AG04450 (cell line): ENCODE measurements at regions of chr1 and their contacts with region 1.

Region 1: DNA sequence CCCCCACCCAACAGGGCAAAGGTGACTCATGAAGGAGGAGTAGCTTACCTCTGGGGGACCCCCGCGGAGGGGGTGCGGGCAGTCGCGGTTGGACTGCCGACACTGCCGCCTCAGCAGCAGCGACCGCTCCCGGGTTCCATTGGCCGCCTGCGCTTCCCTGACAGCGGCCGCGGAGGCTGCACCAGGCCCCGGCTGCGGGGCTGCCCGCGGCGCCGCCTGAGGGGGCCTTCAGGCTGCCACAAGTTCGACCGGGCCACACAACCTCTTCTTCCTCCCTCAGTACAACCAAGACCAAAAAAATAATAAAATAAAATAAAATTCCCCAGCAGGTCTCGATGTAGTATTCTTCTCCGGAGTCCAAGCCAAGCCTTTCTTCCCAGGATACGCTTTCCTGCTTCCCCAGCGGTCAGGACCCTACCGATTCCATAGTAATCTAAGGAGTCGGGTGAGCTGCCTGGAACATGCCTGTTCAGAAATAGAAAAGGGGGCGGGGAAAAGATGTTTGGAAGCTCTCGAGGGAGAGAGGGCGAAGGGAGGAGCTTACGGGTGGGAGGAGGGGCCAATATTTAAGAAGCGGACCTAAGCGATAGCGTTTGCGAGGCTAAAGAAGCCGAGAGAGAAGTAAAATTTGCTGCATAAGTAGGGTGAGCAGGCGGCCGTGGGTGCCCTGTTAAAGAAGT is at the start of gene PI4KB:
- DNase-seq: peak; percentile 93
- H3K4me3 ChIP-seq: peak within 1 kb of the TSS; percentile 84
- H3K27ac ChIP-seq: peak within 1 kb of the TSS; percentile 95
- H3K27me3 ChIP-seq: no peaks in the 10 kb centered on the region
- CTCF ChIP-seq: no peak
- polyA plus RNA-seq, gene PI4KB: 75.2 and 83.2 TPM in 2 replicates

Region 2: DNA sequence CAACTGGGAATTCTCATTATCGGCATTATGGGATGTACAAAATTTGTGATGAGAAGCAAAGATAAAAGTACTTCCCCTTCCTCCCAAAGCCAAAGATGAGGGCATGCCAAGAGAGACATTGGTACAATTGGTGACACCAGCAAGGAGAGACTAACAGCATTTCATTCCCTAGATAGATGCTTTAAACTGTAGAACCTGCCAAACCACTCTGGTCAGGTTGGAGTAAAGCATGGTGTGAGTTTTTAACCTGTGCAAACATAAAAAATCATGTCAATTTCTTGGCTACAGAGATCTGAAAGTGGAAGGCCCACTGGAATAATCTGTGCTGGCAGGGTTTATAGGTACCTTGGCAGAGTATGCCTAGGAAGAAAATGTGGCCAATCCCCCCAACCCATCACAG is 421.0 kb before region 1 on chr1:
- CTCF ChIA-PET with region 1: no interaction called
- POLR2A ChIA-PET with region 1: no interaction called
- DNase-seq: no peak
- H3K4me3 ChIP-seq: no peak overlapping the region
- H3K27ac ChIP-seq: no peak overlapping the region
- H3K27me3 ChIP-seq: peaks cover 2% of the 10 kb centered on the region
- CTCF ChIP-seq: no peak

Region 3: DNA sequence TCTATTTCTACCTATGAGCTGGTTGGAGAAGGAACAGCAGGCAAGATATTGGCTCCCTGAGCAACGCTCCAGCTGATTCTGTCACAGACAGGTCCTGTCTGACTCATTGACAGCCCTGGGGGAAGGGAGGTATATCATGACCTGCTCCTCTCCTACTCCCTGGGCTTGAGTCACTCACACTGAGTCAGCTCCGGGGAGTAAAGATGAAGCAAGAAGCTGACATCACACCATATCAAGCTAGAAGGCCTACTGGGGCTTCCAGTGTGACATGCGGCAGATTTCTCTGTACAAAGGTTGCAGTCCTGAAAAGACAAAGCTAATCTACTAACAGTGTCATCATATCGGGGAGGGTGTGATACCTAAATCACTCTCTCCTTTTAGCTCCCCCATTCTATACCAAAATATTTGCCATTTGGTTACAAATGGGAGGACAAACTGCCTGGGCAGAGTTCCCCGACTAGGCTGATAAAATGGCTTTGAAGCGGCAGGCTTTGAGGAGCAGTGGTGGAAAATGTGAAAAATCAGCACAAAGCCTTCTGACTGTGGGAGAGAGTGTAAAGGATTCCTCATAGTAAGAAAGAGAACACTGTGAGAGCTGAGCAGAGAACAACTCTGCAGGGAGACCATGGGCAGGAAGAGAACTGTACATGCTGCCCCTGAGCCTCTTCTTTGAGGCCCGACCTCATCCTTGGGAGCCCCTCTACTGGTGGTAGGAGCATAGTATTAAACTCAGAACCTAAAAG is 15.6 kb before region 1 on chr1:
- CTCF ChIA-PET with region 1: interaction called, 4 read pairs
- POLR2A ChIA-PET with region 1: interaction called, 45 read pairs
- DNase-seq: peak; percentile 97
- H3K4me3 ChIP-seq: no peak overlapping the region
- H3K27ac ChIP-seq: peak overlapping the region; percentile 99
- H3K27me3 ChIP-seq: no peaks in the 10 kb centered on the region
- CTCF ChIP-seq: no peak

Region 4: DNA sequence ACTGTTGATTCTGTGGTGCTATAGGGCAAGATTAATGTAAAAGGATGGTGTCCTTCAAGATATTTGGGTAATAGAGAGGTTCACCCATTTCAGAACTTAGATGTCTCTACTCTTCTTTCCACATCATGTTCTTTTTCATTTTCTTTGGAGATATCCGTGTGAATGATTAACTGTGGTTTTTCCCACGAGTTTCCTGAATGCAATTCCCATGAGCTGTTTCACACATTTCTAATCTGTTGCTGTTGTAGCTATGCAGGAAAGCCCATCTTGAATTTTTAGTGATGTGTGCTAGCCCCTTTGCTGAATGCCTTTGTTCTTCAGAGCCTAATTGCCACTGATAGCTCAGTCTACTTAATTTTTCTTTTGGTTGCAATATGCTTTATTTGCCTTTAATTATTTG is 312.1 kb after region 1 on chr1:
- CTCF ChIA-PET with region 1: no interaction called
- POLR2A ChIA-PET with region 1: no interaction called
- DNase-seq: no peak
- H3K4me3 ChIP-seq: no peak overlapping the region
- H3K27ac ChIP-seq: no peak overlapping the region
- H3K27me3 ChIP-seq: no peaks in the 10 kb centered on the region
- CTCF ChIP-seq: no peak